HepG2 (cell line): ENCODE measurements at regions of chr10 and their contacts with region 1.

Region 1: GRCh38 chr10:77989081-77989724 is 40.1 kb downstream of the POLR3A start:
- DNase-seq: peak; percentile 94
- ATAC-seq: peak; percentile 99
- H3K4me3 ChIP-seq: peak overlapping the region in 1 of 3 experiments; percentile 17; a peak in 1 of 6 replicates
- H3K27ac ChIP-seq: peak overlapping the region; percentile 77
- H3K4me1 ChIP-seq: peaks cover 24% of the 10 kb centered on the region
- H3K27me3 ChIP-seq: no peaks in the 10 kb centered on the region
- CTCF ChIP-seq: 0 out of 2 replicates have a peak, but pooled peaks have one; percentile 12
- EP300 ChIP-seq: 0 out of 4 replicates have a peak, but pooled peaks of 1 of the 2 experiments have one; percentile 57
- POLR2A ChIP-seq: peak in 1 of 2 experiments; percentile 31; a peak in 1 of 4 replicates
- RAD21 ChIP-seq: peak; percentile 33; the same call in 1 of the 2 replicates

Region 2: GRCh38 chr10:77959384-77959783 is 29.8 kb before region 1 on chr10:
- CTCF ChIA-PET with region 1: no interaction called
- POLR2A ChIA-PET with region 1: no interaction called
- in situ Hi-C with region 1: no loop called
- intact Hi-C with region 1: no loop called
- DNase-seq: no peak
- ATAC-seq: no peak
- H3K4me3 ChIP-seq: no peak overlapping the region
- H3K27ac ChIP-seq: no peak overlapping the region
- H3K4me1 ChIP-seq: peaks cover 20% of the 10 kb centered on the region; the same call in 1 of the 2 replicates
- H3K27me3 ChIP-seq: no peaks in the 10 kb centered on the region
- CTCF ChIP-seq: no peak
- EP300 ChIP-seq: no peak
- POLR2A ChIP-seq: no peak
- RAD21 ChIP-seq: no peak

Region 3: GRCh38 chr10:77970869-77971803 is 18.1 kb before region 1 on chr10:
- CTCF ChIA-PET with region 1: no interaction called
- POLR2A ChIA-PET with region 1: no interaction called
- in situ Hi-C with region 1: no loop called
- intact Hi-C with region 1: no loop called
- DNase-seq: peak; percentile 92
- ATAC-seq: peak; percentile 84
- H3K4me3 ChIP-seq: no peak overlapping the region; a peak in 1 of 6 replicates
- H3K27ac ChIP-seq: peak overlapping the region; percentile 62
- H3K4me1 ChIP-seq: peaks cover 78% of the 10 kb centered on the region
- H3K27me3 ChIP-seq: no peaks in the 10 kb centered on the region
- CTCF ChIP-seq: 0 out of 2 replicates have a peak, but pooled peaks have one; percentile 10
- EP300 ChIP-seq: peak in 1 of 2 experiments; percentile 84; a peak in 2 of 4 replicates
- POLR2A ChIP-seq: no peak
- RAD21 ChIP-seq: no peak

Region 4: GRCh38 chr10:78029269-78030226 is 40.3 kb after region 1 on chr10 and contains the start of gene POLR3A:
- CTCF ChIA-PET with region 1: no interaction called
- POLR2A ChIA-PET with region 1: interaction called, 9 read pairs
- in situ Hi-C with region 1: no loop called
- intact Hi-C with region 1: loop called (anchors 1 kb)
- DNase-seq: peak; percentile 93
- ATAC-seq: peak; percentile 82
- H3K4me3 ChIP-seq: peak within 1 kb of the TSS; percentile 80 to 95 (median 81)
- H3K27ac ChIP-seq: peak within 1 kb of the TSS; percentile 95
- H3K4me1 ChIP-seq: peaks cover 24% of the 10 kb centered on the region
- H3K27me3 ChIP-seq: no peaks in the 10 kb centered on the region; a peak in 2 of 5 replicates
- CTCF ChIP-seq: peak; percentile 73
- EP300 ChIP-seq: no peak
- POLR2A ChIP-seq: peak; percentile 73 to 81
- RAD21 ChIP-seq: no peak; the same call in 1 of the 2 replicates
- total RNA-seq, gene POLR3A: 19.2 and 26.3 TPM in 2 replicates

Region 5: GRCh38 chr10:78931321-78932053 is 942.3 kb after region 1 on chr10:
- CTCF ChIA-PET with region 1: no interaction called
- POLR2A ChIA-PET with region 1: no interaction called
- in situ Hi-C with region 1: no loop called
- intact Hi-C with region 1: no loop called
- DNase-seq: no peak
- ATAC-seq: no peak
- H3K4me3 ChIP-seq: no peak overlapping the region
- H3K27ac ChIP-seq: no peak overlapping the region
- H3K4me1 ChIP-seq: peaks cover 31% of the 10 kb centered on the region
- H3K27me3 ChIP-seq: peaks cover 7 to 58% of the 10 kb centered on the region in 2 experiments; a peak in 3 of 5 replicates
- CTCF ChIP-seq: no peak
- EP300 ChIP-seq: no peak
- POLR2A ChIP-seq: no peak
- RAD21 ChIP-seq: no peak